Activated CD8-positive, alpha-beta T cell treated with anti-CD3 and anti-CD28 coated beads for 36 hours (primary cell): ENCODE measurements at regions of chr19 and their contacts with region 1.

Region 1: DNA sequence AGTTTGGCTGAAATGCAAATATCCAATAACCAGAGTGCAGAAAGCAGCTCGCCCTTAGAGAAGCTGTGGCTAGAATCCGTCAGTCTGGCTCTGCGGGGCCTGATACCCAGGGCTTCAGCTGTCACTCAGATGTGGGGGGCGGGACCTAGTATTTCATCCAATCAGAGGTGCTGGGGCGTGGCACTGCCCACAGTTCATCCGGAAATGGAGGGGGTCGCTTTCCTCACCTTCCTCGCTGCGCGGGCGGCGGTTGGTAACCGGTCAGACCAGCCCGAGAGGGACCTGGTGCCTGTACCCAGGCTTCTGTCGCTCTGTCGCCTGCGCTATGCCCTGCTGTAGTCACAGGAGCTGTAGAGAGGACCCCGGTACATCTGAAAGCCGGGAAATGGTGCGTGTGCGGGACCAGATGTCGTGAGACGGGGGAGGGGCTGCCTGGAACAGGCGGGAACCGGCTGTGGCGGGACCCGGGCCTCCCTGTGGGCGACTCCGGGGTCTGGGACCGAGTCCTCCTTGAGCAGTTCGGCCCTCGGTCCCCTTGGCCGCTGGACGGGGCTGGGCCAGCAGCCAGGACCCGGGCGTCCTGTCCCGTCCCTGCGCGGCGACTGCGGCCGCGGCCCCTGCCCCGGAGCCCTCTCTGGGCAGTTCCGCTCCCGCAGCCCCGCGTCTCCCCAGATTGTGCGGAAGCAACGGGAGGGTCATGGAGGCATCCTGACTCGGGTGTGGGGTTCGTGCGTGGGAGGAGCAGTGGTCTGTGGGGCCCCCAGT is at the start of gene ZNF700:
- DNase-seq: peak; percentile 99
- ATAC-seq: peak; percentile 94
- H3K4me3 Mint-ChIP-seq: peak within 1 kb of the TSS; percentile 93
- H3K27ac Mint-ChIP-seq: peak within 1 kb of the TSS; percentile 99
- H3K4me1 Mint-ChIP-seq: peaks cover 39% of the 10 kb centered on the region
- H3K27me3 Mint-ChIP-seq: no peaks in the 10 kb centered on the region
- CTCF ChIP-seq: no peak
- total RNA-seq, gene ZNF700: 12.0 to 14.0 TPM

Region 2: GRCh38 chr19:11905928-11906327 is 19.1 kb before region 1 on chr19:
- CTCF ChIA-PET with region 1: interaction called, 10 read pairs
- POLR2A ChIA-PET with region 1: no interaction called
- intact Hi-C with region 1: no loop called
- DNase-seq: no peak
- ATAC-seq: no peak
- H3K4me3 Mint-ChIP-seq: no peak overlapping the region
- H3K27ac Mint-ChIP-seq: no peak overlapping the region
- H3K4me1 Mint-ChIP-seq: no peaks in the 10 kb centered on the region
- H3K27me3 Mint-ChIP-seq: no peaks in the 10 kb centered on the region
- CTCF ChIP-seq: no peak

Region 3: DNA sequence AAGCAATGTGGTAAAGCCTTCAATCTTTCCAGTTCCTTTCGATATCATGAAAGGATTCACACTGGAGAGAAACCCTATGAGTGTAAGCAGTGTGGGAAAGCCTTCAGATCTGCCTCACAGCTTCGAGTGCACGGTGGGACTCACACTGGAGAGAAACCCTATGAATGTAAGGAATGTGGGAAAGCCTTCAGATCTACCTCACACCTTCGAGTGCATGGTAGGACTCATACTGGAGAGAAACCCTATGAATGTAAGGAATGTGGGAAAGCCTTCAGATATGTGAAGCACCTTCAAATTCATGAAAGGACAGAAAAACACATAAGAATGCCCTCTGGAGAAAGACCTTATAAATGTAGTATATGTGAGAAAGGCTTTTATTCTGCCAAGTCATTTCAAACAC is 24.1 kb after region 1 on chr19:
- CTCF ChIA-PET with region 1: no interaction called
- POLR2A ChIA-PET with region 1: no interaction called
- intact Hi-C with region 1: no loop called
- DNase-seq: no peak
- ATAC-seq: no peak
- H3K4me3 Mint-ChIP-seq: no peak overlapping the region
- H3K27ac Mint-ChIP-seq: no peak overlapping the region
- H3K4me1 Mint-ChIP-seq: no peaks in the 10 kb centered on the region
- H3K27me3 Mint-ChIP-seq: no peaks in the 10 kb centered on the region
- CTCF ChIP-seq: no peak

Region 4: GRCh38 chr19:11964858-11965645 is 40.0 kb after region 1 on chr19 and contains the start of gene ZNF763:
- CTCF ChIA-PET with region 1: interaction called, 36 read pairs
- POLR2A ChIA-PET with region 1: interaction called, 3 read pairs
- intact Hi-C with region 1: no loop called
- DNase-seq: peak; percentile 97
- ATAC-seq: peak; percentile 97
- H3K4me3 Mint-ChIP-seq: peak within 1 kb of the TSS; percentile 88
- H3K27ac Mint-ChIP-seq: peak within 1 kb of the TSS; percentile 92
- H3K4me1 Mint-ChIP-seq: peaks cover 24% of the 10 kb centered on the region
- H3K27me3 Mint-ChIP-seq: no peaks in the 10 kb centered on the region
- CTCF ChIP-seq: no peak
- total RNA-seq, gene ZNF763: 0.83 to 1.7 TPM

Region 5: GRCh38 chr19:12064590-12065538 is 139.8 kb after region 1 on chr19 and contains the start of gene ZNF844:
- CTCF ChIA-PET with region 1: interaction called, 31 read pairs
- POLR2A ChIA-PET with region 1: interaction called, 4 read pairs
- intact Hi-C with region 1: no loop called
- DNase-seq: peak; percentile 89
- ATAC-seq: peak; percentile 93
- H3K4me3 Mint-ChIP-seq: peak within 1 kb of the TSS; percentile 82
- H3K27ac Mint-ChIP-seq: peak within 1 kb of the TSS; percentile 89
- H3K4me1 Mint-ChIP-seq: peaks cover 9% of the 10 kb centered on the region
- H3K27me3 Mint-ChIP-seq: no peaks in the 10 kb centered on the region
- CTCF ChIP-seq: no peak
- total RNA-seq, gene ZNF844: 2.6 to 3.8 TPM